ENCODE measurements at regions of chr1 and their contacts with region 1.

Region 1: GRCh38 chr1:184892116-184892515 is 82.2 kb downstream of the NIBAN1 start:
- DNase-seq: no peak
- ATAC-seq: peak; percentile 94
- H3K4me3 ChIP-seq: no peak overlapping the region
- H3K27ac ChIP-seq: no peak overlapping the region
- H3K4me1 ChIP-seq: peaks cover 12% of the 10 kb centered on the region
- H3K27me3 ChIP-seq: no peaks in the 10 kb centered on the region
- CTCF ChIP-seq: no peak
- EP300 ChIP-seq: no peak
- POLR2A ChIP-seq: no peak
- RAD21 ChIP-seq: no peak

Region 2: GRCh38 chr1:184635347-184635979 is 256.7 kb before region 1 on chr1:
- CTCF ChIA-PET with region 1: no interaction called
- POLR2A ChIA-PET with region 1: no interaction called
- RAD21 ChIA-PET with region 1: no interaction called
- SMC1A ChIA-PET with region 1: no interaction called
- in situ Hi-C with region 1: no loop called
- intact Hi-C with region 1: no loop called
- DNase-seq: no peak
- ATAC-seq: no peak
- H3K4me3 ChIP-seq: no peak overlapping the region
- H3K27ac ChIP-seq: no peak overlapping the region
- H3K4me1 ChIP-seq: no peaks in the 10 kb centered on the region
- H3K27me3 ChIP-seq: no peaks in the 10 kb centered on the region; a peak in 2 of 4 replicates
- CTCF ChIP-seq: no peak
- EP300 ChIP-seq: no peak
- POLR2A ChIP-seq: no peak
- RAD21 ChIP-seq: no peak

Region 3: GRCh38 chr1:184838489-184838951 is 53.6 kb before region 1 on chr1:
- CTCF ChIA-PET with region 1: no interaction called
- POLR2A ChIA-PET with region 1: no interaction called
- RAD21 ChIA-PET with region 1: interaction called, 3 read pairs
- SMC1A ChIA-PET with region 1: interaction called, 4 read pairs
- in situ Hi-C with region 1: no loop called
- intact Hi-C with region 1: loop called (anchors 2 kb)
- DNase-seq: no peak
- ATAC-seq: no peak
- H3K4me3 ChIP-seq: no peak overlapping the region
- H3K27ac ChIP-seq: no peak overlapping the region
- H3K4me1 ChIP-seq: peaks cover 7% of the 10 kb centered on the region
- H3K27me3 ChIP-seq: no peaks in the 10 kb centered on the region
- CTCF ChIP-seq: no peak
- EP300 ChIP-seq: no peak
- POLR2A ChIP-seq: no peak
- RAD21 ChIP-seq: no peak

Region 4: GRCh38 chr1:184905474-184905894 is 13.4 kb after region 1 on chr1:
- CTCF ChIA-PET with region 1: interaction called, 4 read pairs
- POLR2A ChIA-PET with region 1: no interaction called
- RAD21 ChIA-PET with region 1: interaction called, 3 read pairs
- SMC1A ChIA-PET with region 1: interaction called, 24 read pairs
- in situ Hi-C with region 1: no loop called
- intact Hi-C with region 1: no loop called
- DNase-seq: no peak
- ATAC-seq: peak; percentile 41
- H3K4me3 ChIP-seq: no peak overlapping the region
- H3K27ac ChIP-seq: peak overlapping the region; percentile 9; the same call in 1 of the 2 replicates
- H3K4me1 ChIP-seq: peaks cover 10% of the 10 kb centered on the region
- H3K27me3 ChIP-seq: no peaks in the 10 kb centered on the region
- CTCF ChIP-seq: no peak
- EP300 ChIP-seq: no peak
- POLR2A ChIP-seq: no peak
- RAD21 ChIP-seq: no peak

Region 5: GRCh38 chr1:185267301-185267700 is 375.2 kb after region 1 on chr1:
- CTCF ChIA-PET with region 1: no interaction called
- POLR2A ChIA-PET with region 1: no interaction called
- RAD21 ChIA-PET with region 1: no interaction called
- SMC1A ChIA-PET with region 1: no interaction called
- in situ Hi-C with region 1: no loop called
- intact Hi-C with region 1: no loop called
- DNase-seq: no peak
- ATAC-seq: no peak
- H3K4me3 ChIP-seq: no peak overlapping the region
- H3K27ac ChIP-seq: no peak overlapping the region
- H3K4me1 ChIP-seq: no peaks in the 10 kb centered on the region
- H3K27me3 ChIP-seq: no peaks in the 10 kb centered on the region
- CTCF ChIP-seq: no peak
- EP300 ChIP-seq: no peak
- POLR2A ChIP-seq: no peak
- RAD21 ChIP-seq: no peak

Region 6: DNA sequence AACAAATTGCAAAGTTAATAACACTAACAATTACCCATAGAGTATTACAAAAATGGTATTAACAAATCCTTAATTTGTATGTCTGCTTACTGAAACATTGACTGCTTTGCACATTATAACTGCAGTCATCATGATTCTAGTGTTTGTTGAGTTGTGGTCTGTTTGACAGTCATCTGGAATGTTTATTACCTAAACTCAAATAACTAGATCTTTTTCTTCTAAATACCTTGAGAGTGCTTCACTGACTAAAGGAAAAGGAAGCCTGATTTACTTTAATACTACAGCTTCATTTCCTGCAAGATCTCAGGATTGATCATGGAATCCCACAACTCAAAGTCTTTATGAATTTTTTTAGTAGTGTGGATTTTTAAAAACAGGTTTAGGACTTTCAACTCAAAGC is 912.1 kb after region 1 on chr1:
- CTCF ChIA-PET with region 1: no interaction called
- POLR2A ChIA-PET with region 1: no interaction called
- RAD21 ChIA-PET with region 1: no interaction called
- SMC1A ChIA-PET with region 1: no interaction called
- in situ Hi-C with region 1: no loop called
- intact Hi-C with region 1: no loop called
- DNase-seq: no peak
- ATAC-seq: no peak
- H3K4me3 ChIP-seq: no peak overlapping the region
- H3K27ac ChIP-seq: no peak overlapping the region
- H3K4me1 ChIP-seq: no peaks in the 10 kb centered on the region
- H3K27me3 ChIP-seq: no peaks in the 10 kb centered on the region
- CTCF ChIP-seq: no peak
- EP300 ChIP-seq: no peak
- POLR2A ChIP-seq: no peak
- RAD21 ChIP-seq: no peak